Sciatic nerve (tissue), 2 donors: ENCODE measurements at regions of chr1 and their contacts with region 1.

Region 1: DNA sequence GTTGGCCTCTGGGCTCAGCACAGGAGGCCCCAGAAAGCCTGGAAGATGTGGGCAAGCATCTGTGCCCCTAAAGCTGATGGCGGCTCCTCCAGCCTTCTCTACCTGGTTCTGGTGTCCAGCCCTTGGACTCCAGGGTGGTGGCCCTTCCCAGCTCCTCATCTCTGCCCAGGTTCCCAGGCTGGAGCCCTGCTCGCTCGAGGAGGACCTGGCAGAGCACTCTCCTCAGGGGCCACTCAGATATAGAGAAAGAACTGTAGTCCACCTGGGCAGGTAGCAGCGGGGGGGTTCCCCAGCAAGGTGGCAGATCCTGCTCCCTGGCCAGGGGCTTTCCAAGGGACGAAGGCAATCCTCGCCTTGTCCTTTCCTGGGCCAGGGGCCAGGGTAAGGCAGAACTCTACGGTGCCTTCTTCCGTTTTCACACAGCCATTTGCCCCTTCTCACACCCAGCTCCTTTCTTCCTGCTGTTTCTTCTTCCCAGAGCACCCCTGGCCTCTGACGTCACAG is 18.9 kb downstream of the WNT4 start:
- DNase-seq: no peak
- ATAC-seq: no peak

Region 2: DNA sequence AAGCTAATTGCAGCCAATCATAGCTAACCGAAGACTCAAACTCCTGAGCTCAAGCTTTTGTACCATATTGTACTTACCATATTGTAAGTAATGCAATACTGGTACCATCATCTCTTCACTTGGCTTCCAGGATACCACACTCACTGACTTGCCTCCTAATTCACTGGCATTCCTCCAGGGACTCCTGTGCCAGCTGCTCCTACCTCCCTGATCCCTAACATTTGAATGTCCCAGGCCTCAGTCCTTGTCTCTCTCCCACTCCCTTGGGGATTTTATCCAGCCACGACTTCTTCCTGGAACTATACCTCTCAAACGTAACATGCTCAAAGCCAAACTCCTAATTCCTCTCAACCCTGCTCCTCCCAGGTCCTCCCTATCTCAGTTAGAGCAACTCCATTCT is 374.8 kb before region 1 on chr1:
- intact Hi-C with region 1: no loop called
- DNase-seq: no peak
- ATAC-seq: no peak

Region 3: DNA sequence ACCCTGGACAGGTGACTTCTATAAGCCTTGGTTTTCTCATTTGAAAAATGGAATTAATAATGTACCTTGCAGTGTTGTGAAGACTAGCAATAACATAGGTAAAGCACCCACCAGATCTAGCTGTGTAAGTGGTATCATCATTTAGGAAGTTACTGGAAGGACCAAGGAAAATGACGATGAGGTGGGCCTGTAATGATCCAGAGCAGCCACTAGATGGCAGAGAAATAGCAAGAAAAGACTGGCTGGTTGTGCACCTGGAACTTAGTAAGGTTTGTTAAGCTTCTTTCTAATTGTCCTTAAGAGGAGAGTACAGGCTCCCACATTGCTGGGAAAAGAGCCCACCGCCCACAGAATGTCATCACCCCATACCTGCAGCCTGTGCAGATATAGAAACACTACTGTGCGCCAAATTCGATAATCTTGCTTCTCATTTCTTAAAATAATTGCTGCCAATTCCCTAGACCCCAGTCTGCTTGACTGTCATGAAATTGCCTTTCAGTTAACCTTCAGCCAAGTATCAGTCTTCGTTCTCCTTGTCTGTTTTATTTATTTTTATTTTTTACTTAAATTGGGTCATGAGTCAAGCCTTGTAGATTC is 18.2 kb before region 1 on chr1:
- intact Hi-C with region 1: loop called (anchors 2 kb)
- DNase-seq: no peak
- ATAC-seq: no peak